Activated CD8-positive, alpha-beta T cell treated with anti-CD3 and anti-CD28 coated beads for 36 hours (primary cell): ENCODE measurements at regions of chr10 and their contacts with region 1.

Region 1: DNA sequence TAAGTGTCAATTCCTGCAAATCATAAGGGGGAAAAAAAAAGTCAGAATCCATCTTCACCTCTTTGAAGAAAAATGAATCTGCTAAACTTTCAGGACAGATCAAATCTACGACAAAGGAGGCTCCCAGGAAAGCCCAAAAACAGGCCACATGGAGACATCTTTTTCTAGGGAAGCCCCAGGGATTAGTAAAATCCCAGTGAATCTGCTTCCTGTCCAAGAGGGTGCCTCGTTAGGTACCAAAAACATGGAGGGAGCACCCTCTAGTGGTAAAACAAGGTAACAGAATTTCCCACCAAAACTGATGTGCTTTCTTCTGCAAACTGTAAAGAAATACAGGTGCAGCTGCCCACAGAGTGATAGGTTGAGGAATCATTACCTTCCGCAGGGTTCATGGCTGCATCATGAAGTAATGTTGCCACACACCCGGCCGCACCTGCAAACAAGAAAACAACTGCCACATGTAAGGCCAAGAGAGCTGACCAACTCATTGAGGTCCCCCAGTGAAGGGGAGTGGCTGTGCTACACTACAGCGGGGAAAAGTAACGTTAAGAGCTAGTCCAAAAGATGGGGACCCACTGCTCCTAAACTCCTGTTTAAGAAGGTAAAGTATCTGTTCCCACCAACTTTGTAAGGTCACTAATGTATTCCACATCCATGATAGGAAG is 7.9 kb downstream of the SLC25A28 start:
- DNase-seq: peak; percentile 26
- ATAC-seq: peak; percentile 63
- H3K4me3 Mint-ChIP-seq: no peak overlapping the region
- H3K27ac Mint-ChIP-seq: peak overlapping the region; percentile 9
- H3K4me1 Mint-ChIP-seq: peaks cover 30% of the 10 kb centered on the region
- H3K27me3 Mint-ChIP-seq: no peaks in the 10 kb centered on the region
- CTCF ChIP-seq: peak; percentile 85

Region 2: DNA sequence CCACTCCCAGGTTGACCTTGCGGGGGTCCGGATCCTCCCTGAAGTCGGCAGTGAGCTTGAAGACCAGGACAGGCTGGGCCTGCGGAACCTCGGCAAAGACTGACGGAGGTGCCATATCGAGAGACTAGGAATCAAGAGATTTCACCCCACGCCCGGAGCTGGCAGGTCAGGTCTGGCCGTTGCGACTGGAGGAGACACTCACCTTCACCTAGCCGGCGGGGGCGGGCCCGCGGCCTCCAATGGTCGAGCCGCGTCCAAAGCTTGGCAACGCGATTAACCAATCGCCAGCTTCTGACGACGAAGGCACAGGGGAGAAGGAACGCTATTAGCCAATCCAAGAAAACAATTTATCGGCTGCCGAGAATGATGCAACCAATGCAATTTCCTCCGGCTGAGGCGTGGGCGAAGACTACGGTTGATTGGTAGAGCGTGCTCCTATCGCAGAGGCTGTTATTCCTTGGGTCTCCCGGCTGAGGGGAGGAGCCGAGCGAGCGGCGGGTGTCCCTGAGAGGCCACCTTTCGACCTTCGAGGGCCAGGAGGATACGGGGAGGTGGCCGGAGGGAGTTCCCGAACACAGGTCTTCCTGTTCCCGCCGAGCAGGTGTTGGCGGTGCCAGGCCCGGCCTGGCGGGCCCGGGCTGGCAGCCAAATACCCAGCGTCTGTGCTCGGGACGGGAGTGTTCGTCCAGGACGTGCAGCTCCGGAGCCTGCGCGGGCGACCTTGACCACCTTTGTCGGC is 181.7 kb before region 1 on chr10 and contains the start of gene GOT1:
- CTCF ChIA-PET with region 1: interaction called, 46 read pairs
- POLR2A ChIA-PET with region 1: interaction called, 10 read pairs
- intact Hi-C with region 1: no loop called
- DNase-seq: peak; percentile 99
- ATAC-seq: peak; percentile 94
- H3K4me3 Mint-ChIP-seq: peak within 1 kb of the TSS; percentile 100
- H3K27ac Mint-ChIP-seq: peak within 1 kb of the TSS; percentile 99
- H3K4me1 Mint-ChIP-seq: peaks cover 31% of the 10 kb centered on the region
- H3K27me3 Mint-ChIP-seq: no peaks in the 10 kb centered on the region
- CTCF ChIP-seq: no peak
- total RNA-seq, gene GOT1: 48.7 to 51.5 TPM

Region 3: DNA sequence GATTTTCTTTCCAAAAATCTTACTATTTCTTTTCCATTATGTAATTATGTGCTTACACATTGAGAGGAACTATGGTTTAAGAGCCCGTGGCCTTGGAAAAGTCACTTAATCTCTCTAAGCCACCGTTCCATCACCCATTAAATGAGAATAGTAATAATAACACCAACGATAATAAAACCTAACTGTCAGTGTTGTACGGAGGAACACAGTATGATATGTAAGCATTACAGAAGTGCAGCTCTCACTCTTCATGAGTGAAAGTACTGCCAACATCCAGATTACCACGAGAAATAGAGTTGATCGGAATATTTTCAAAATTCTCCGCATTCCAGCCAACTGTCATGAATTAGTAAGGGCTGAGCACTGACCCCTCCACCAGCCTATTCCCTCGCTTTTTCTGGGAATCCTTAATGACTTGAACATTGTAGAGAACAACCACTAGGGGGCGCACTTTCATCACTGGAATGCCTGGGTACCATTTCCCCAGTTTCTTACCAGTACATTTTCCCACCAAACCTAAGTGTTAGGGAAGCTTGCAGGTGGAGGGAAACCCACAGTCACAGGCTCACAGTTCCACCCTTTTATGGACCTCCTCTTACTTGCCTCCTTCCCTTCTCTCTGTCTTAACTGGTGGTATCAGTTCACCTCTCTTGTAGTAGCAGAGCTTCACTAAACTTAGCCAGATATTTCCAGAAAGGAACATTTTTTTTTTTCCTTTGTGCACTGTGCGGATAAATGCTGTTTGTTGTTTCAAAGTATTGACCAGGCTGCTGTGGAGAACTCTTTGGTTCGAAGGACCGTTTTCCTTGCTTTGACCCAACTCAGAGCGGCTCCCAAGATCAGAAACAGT is 51.8 kb before region 1 on chr10:
- CTCF ChIA-PET with region 1: interaction called, 80 read pairs
- POLR2A ChIA-PET with region 1: no interaction called
- intact Hi-C with region 1: loop called (anchors 5 kb)
- DNase-seq: peak; percentile 43
- ATAC-seq: no peak
- H3K4me3 Mint-ChIP-seq: no peak overlapping the region
- H3K27ac Mint-ChIP-seq: no peak overlapping the region
- H3K4me1 Mint-ChIP-seq: peaks cover 11% of the 10 kb centered on the region
- H3K27me3 Mint-ChIP-seq: peaks cover 19% of the 10 kb centered on the region
- CTCF ChIP-seq: peak; percentile 88

Region 4: DNA sequence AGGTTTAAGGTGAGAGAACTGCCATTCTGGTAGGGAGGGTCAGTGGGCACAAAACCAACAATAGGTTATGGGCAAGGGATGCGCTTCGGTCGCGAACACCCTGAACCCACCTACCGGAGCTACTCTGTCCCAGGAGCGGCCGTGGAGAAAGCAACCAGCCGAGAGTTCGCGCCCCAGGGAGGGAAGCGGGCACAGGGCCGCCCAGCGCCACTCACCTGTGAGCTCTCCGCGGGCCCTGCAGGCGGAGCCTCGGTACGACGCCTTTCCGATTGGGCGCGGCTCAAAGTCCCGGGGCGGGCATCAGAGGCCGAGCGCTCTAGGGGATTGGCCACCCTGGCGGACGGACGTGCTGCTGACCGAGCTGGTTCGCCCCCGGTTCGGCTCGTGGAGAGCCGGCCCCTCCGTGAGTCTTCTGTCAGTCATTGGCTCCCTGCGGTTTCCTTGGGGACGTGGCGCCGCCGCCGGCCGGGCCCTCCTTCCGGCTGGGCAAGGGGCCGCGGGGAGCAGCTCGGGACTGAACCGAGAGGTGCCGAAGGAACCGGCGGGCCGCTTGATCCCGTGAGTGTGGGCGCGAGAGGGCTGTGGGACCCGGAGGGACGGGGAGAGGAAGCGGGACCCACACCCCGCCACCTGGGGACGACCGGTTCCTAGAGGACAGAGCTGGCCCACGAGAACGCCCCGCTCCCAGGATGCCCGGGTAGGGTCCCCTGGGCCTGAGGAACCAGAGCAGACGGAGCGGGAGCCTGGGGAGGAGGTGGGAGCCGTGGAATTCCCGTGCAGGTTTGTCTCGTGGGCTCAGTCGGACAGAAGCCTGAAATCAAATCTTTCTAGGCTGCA is 47.0 kb after region 1 on chr10 and contains the start of gene ENTPD7:
- CTCF ChIA-PET with region 1: interaction called, 16 read pairs
- POLR2A ChIA-PET with region 1: interaction called, 3 read pairs
- intact Hi-C with region 1: no loop called
- DNase-seq: peak; percentile 96
- ATAC-seq: peak; percentile 99
- H3K4me3 Mint-ChIP-seq: peak within 1 kb of the TSS; percentile 84
- H3K27ac Mint-ChIP-seq: peak within 1 kb of the TSS; percentile 83
- H3K4me1 Mint-ChIP-seq: peaks cover 21% of the 10 kb centered on the region
- H3K27me3 Mint-ChIP-seq: peaks cover 8% of the 10 kb centered on the region
- CTCF ChIP-seq: peak; percentile 14
- total RNA-seq, gene ENTPD7: 1.9 to 2.2 TPM